Activated T-helper 2 cell treated with anti-CD3 and anti-CD28 coated beads, Interferon-gamma antibody, Interleukin-2, Interleukin-4, amounts not matched to agents 10 μg/mL and 5 μg/mL and 100 μg/mL, durations not matched to agents 14 hours and 24 hours and 36 hours (primary cell): ENCODE measurements at regions of chr19 and their contacts with region 1.

Region 1: DNA sequence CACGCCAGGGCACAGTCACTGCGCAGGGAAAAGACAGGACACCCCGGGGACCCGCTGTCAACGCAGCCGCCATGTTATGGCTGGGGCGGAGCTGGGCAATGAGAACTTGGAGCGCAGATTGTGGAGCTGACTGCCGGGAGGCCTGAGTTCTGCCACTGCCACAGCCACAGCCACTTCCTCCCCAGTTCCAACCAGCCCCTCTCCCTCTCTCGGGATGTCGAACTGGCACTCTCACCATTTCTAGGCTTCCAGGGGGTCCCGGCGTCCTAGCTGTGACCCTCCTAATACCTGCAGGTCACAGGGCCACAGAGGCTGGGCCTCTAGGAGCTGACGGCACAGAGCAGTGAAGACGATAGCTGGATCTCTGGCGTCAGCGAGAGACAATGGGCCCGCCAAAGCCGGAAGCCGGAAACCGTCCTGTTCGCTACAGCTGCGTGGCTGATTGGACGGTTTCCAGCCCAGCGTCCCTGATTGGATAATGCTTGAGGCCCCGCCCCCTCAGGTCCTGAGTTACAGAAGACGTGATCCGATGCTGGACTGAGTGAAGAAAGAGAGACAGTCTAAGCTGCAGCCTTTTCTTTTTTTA is at the start of gene ZNF506:
- DNase-seq: peak; percentile 90
- H3K4me3 Mint-ChIP-seq: peak within 1 kb of the TSS; percentile 96
- H3K27ac Mint-ChIP-seq: peak within 1 kb of the TSS; percentile 98
- H3K4me1 Mint-ChIP-seq: peaks cover 13% of the 10 kb centered on the region
- H3K27me3 Mint-ChIP-seq: no peaks in the 10 kb centered on the region
- total RNA-seq, gene ZNF506: 13.2 and 15.1 TPM in 2 replicates

Region 2: GRCh38 chr19:19677579-19677978 is 143.9 kb before region 1 on chr19:
- intact Hi-C with region 1: no loop called
- DNase-seq: no peak
- H3K4me3 Mint-ChIP-seq: no peak overlapping the region
- H3K27ac Mint-ChIP-seq: no peak overlapping the region
- H3K4me1 Mint-ChIP-seq: no peaks in the 10 kb centered on the region
- H3K27me3 Mint-ChIP-seq: no peaks in the 10 kb centered on the region

Region 3: GRCh38 chr19:19732579-19733501 is 88.6 kb before region 1 on chr19 and contains the start of gene ZNF14:
- intact Hi-C with region 1: loop called (anchors 1 kb)
- DNase-seq: peak; percentile 84
- H3K4me3 Mint-ChIP-seq: peak within 1 kb of the TSS; percentile 97
- H3K27ac Mint-ChIP-seq: peak within 1 kb of the TSS; percentile 91
- H3K4me1 Mint-ChIP-seq: peaks cover 11% of the 10 kb centered on the region
- H3K27me3 Mint-ChIP-seq: no peaks in the 10 kb centered on the region
- total RNA-seq, gene ZNF14: 4.2 and 4.6 TPM in 2 replicates

Region 4: DNA sequence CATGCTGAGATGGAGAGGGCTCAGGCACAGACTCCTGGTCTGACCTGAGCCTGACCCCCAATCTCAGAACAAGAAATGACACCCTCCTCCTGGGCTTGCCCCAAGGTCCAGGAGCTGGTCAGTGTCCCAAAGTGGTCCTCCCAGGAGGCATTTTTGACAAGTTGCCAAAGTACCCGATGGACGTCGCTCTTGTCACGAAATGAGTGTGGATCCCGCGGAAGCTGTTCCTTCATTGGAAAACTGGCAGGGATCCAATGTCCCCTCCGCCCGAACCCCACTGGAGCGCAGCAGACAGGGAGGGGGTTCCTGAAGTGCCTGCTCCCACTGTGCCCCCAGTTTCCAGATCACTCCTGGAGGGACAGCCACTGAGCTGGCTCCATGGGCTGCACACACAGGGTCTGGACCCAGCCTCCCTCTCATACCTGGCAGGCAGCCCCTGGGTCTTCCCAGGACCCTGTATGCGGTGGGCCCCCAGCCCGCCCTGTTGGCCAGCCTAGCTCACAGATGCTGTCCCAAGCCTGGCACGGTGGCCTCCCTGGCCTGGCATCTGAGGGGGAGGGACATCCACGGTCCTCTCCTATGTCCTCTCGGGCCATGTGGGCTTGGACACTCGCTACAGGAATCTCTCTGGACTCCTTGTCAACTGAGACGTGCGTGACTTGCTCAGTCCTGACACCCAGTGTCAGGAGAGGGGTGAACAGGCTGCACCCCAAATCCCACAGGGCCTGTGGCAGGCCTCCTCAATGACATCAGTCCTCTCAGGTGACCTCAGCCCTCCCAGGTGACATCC is 75.8 kb before region 1 on chr19:
- intact Hi-C with region 1: no loop called
- DNase-seq: no peak
- H3K4me3 Mint-ChIP-seq: no peak overlapping the region
- H3K27ac Mint-ChIP-seq: no peak overlapping the region
- H3K4me1 Mint-ChIP-seq: no peaks in the 10 kb centered on the region
- H3K27me3 Mint-ChIP-seq: no peaks in the 10 kb centered on the region

Region 5: DNA sequence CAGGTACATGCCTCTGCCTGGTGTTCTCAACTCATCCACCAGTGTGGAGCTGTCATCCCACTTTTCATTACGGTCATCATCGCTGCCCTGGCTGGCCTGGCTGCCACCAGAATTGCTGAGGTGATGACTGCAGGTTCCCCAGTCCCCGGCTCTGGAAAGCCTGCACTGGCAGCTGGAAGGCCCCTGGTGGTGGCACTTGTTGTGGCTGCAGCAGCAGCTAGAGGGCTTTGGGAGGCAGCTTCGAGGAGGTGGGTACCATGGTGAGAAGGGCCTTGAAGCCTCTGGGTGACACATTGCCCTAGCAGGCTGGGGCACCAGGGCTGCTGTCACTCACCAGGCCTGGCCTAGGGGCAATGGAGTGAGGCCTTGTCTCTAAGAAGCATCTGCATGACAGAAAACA is 63.3 kb before region 1 on chr19:
- intact Hi-C with region 1: no loop called
- DNase-seq: no peak
- H3K4me3 Mint-ChIP-seq: no peak overlapping the region
- H3K27ac Mint-ChIP-seq: no peak overlapping the region
- H3K4me1 Mint-ChIP-seq: no peaks in the 10 kb centered on the region
- H3K27me3 Mint-ChIP-seq: no peaks in the 10 kb centered on the region

Region 6: DNA sequence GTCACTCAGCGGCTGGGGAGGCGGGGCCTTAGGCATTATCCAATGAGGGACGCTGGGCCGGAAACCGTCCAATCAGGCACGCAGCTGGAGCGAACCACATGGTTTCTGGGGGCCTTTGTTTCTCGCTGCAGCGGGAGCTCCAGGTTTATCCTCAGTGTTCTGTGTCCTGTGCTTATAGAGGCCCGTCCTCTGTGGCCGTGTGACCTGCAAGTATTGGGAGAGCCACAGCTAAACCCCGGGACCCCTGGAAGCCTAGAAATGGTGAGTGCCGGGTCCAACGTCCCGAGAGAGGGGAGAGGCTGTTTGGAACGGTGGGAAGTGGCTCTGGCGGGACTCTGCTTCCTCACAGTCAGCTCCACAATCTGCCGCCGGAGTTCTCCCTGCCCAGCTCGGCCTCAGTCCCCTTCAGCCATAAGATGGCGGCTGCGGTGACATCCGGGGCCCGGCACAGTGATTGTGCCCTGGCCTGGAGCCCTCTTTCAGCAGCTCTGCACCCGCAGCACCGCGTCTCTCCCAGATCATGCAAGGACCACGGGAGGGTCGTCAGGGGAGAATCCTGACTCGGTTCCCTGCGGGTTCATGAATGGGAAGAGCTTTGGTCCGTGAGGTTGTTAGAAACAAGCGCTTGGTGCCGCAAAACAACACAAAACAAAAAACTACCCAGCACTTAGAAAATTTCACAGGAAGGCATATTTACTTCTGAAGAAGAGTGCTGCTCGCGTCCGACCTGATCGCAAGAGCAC is 44.5 kb after region 1 on chr19 and contains the start of gene ZNF253:
- intact Hi-C with region 1: loop called (anchors 1 kb)
- DNase-seq: peak; percentile 92
- H3K4me3 Mint-ChIP-seq: peak within 1 kb of the TSS; percentile 93
- H3K27ac Mint-ChIP-seq: peak within 1 kb of the TSS; percentile 97
- H3K4me1 Mint-ChIP-seq: peaks cover 7% of the 10 kb centered on the region
- H3K27me3 Mint-ChIP-seq: no peaks in the 10 kb centered on the region
- total RNA-seq, gene ZNF253: 8.6 and 9.9 TPM in 2 replicates

Region 7: GRCh38 chr19:20051841-20052768 is 230.6 kb after region 1 on chr19:
- intact Hi-C with region 1: no loop called
- DNase-seq: peak; percentile 28
- H3K4me3 Mint-ChIP-seq: peak overlapping the region; percentile 92
- H3K27ac Mint-ChIP-seq: peak overlapping the region; percentile 46
- H3K4me1 Mint-ChIP-seq: peaks cover 1% of the 10 kb centered on the region
- H3K27me3 Mint-ChIP-seq: no peaks in the 10 kb centered on the region